HCT116 (cell line): ENCODE measurements at regions of chr3 and their contacts with region 1.

Region 1: GRCh38 chr3:88203642-88204055 is 53.9 kb downstream of the C3orf38 start:
- DNase-seq: peak; percentile 36
- ATAC-seq: peak; percentile 92
- H3K4me3 ChIP-seq: no peak overlapping the region
- H3K27ac ChIP-seq: no peak overlapping the region
- H3K4me1 ChIP-seq: no peaks in the 10 kb centered on the region
- H3K27me3 ChIP-seq: no peaks in the 10 kb centered on the region
- CTCF ChIP-seq: peak; percentile 14 to 89 (median 76); a peak in 4 of 6 replicates
- POLR2A ChIP-seq: no peak
- RAD21 ChIP-seq: peak; percentile 64

Region 2: GRCh38 chr3:88075072-88075471 is 128.6 kb before region 1 on chr3:
- CTCF ChIA-PET with region 1: no interaction called
- POLR2A ChIA-PET with region 1: no interaction called
- RAD21 ChIA-PET with region 1: no interaction called
- intact Hi-C with region 1: no loop called
- DNase-seq: no peak
- ATAC-seq: no peak
- H3K4me3 ChIP-seq: no peak overlapping the region
- H3K27ac ChIP-seq: no peak overlapping the region
- H3K4me1 ChIP-seq: no peaks in the 10 kb centered on the region
- H3K27me3 ChIP-seq: no peaks in the 10 kb centered on the region
- CTCF ChIP-seq: no peak
- POLR2A ChIP-seq: no peak
- RAD21 ChIP-seq: no peak

Region 3: DNA sequence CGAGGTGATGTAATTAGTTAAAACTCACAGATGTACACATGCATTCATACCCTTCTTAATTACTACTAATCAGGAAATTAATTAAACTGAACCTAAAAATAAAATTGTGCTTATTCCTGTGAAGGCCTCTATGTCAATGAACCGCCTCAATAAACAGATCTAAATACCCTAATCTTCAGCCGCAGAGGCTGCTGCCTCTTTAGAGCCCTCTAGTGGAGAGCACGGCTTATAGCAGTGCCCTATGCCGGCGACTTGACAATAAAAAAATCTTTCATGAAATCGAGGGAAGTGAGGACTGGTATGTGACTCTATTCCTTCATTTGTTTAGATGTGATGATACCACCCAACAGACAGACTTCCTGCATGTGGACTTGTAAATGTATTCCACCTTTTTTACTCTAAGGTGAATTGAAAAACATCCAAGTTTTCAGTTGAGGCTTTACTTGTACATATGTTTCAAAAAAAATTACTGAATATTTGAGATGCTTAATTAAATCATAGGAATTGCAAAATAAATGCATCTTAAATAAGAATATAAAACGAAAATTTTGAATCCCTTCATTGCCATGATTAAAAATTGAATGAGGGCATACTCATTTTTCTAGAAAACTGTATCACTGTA is 895.4 kb after region 1 on chr3:
- CTCF ChIA-PET with region 1: no interaction called
- POLR2A ChIA-PET with region 1: no interaction called
- RAD21 ChIA-PET with region 1: no interaction called
- intact Hi-C with region 1: loop called (anchors 5 kb)
- DNase-seq: peak; percentile 7
- ATAC-seq: 0 out of 2 replicates have a peak, but pooled peaks have one; percentile 38
- H3K4me3 ChIP-seq: no peak overlapping the region
- H3K27ac ChIP-seq: no peak overlapping the region
- H3K4me1 ChIP-seq: no peaks in the 10 kb centered on the region
- H3K27me3 ChIP-seq: no peaks in the 10 kb centered on the region
- CTCF ChIP-seq: peak in 2 of 3 experiments; percentile 70 to 73; a peak in 4 of 6 replicates
- POLR2A ChIP-seq: no peak
- RAD21 ChIP-seq: peak; percentile 26; the same call in 1 of the 2 replicates

Region 4: DNA sequence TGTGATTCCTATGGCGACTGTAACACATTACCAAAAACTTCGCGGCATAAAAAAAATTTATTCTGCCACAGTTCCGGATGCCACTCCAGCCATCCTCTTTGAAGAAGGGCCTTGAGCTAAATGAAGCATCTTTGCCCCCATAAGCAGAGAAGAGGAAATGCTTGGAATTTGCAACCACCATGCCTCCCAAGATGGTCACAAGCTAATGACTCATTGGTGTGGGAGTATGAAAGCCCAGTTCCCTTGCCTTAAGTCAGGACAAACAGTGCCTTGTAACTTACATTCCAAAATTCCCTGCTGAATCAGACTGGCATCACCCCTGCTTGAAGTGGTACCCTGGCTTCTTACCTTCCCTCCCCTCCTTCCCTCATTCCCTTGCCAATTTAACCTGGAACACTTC is 1981.2 kb after region 1 on chr3:
- CTCF ChIA-PET with region 1: no interaction called
- POLR2A ChIA-PET with region 1: no interaction called
- RAD21 ChIA-PET with region 1: no interaction called
- intact Hi-C with region 1: loop called (anchors 5 kb)
- DNase-seq: no peak
- ATAC-seq: no peak
- H3K4me3 ChIP-seq: no peak overlapping the region
- H3K27ac ChIP-seq: no peak overlapping the region
- H3K4me1 ChIP-seq: no peaks in the 10 kb centered on the region
- H3K27me3 ChIP-seq: no peaks in the 10 kb centered on the region
- CTCF ChIP-seq: no peak
- POLR2A ChIP-seq: no peak
- RAD21 ChIP-seq: no peak